ENCODE measurements at regions of chr20 and their contacts with region 1.

Region 1: DNA sequence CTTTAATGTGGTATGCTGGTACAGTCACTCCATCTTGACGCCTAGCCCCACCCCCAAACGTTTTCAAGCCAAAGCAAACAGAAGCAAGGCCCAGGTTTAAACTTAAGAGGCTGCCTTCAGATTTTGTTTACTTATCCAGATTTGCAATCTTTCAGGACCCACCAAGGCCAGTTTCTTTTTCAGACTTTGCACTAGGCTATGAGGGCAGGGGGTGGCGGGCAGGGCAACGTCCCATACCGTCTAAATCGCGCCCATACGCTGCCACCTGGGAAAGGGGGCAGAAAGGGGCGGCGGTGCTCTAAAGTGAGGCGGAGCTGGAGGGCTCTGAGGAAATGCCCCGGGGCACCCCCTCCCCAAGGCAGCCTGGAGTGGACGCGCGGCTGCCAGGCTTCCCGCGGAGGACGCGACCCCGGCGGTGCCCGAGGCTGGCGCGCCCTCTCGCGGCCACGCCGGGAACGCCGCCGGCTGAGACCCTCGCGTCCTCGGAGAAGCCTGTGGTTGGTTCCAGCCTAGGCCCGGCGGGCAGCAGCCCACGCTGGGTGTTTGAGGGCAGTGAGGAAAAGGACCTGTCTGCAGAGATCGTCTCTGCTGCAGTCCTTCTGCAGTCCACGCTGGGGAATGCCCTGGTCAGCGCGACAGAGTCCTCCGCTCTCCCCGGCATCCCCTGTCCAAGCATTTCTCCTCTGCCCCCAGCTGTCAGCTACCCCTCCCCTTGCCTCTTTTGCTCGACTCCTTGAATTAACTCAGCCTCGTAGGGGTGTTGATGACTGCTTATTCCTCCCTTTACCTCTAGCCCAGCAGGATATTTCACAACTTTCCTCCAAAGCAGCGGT is 129.2 kb upstream of the PRND start:
- DNase-seq: peak; percentile 22 to 75
- H3K4me3 ChIP-seq: peak overlapping the region; percentile 22
- H3K4me1 ChIP-seq: no peaks in the 10 kb centered on the region
- H3K27me3 ChIP-seq: peaks cover 21% of the 10 kb centered on the region

Region 2: GRCh38 chr20:4112481-4113421 is 479.8 kb before region 1 on chr20:
- in situ Hi-C with region 1: loop called (anchors 10 kb)
- DNase-seq: no peak
- H3K4me3 ChIP-seq: no peak overlapping the region
- H3K4me1 ChIP-seq: 0 out of 2 replicates have a peak, but pooled peaks cover 3% of the 10 kb centered on the region
- H3K27me3 ChIP-seq: peaks cover 9% of the 10 kb centered on the region; the same call in 1 of the 2 replicates

Region 3: DNA sequence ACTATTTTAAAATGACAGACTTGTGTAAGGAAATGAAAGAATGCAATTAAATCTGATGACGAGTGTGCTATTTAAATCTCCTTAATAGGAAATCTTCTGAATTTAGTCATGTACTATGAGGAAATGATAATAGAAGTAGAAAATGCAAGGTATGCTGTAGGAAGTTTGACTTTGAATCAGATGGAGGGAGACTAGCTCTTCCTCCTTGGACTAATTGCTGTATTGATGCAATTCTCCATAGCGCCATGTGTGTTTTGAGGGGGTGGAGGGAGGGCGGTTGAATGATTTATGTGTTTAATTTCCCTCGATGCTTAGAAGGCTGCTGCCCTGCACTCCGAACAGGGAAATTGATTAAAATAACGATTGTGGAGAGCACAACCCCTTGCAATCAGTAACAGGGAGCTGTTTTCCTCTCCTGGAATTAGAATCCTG is 85.2 kb before region 1 on chr20:
- in situ Hi-C with region 1: no loop called
- DNase-seq: no peak
- H3K4me3 ChIP-seq: no peak overlapping the region
- H3K4me1 ChIP-seq: no peaks in the 10 kb centered on the region
- H3K27me3 ChIP-seq: no peaks in the 10 kb centered on the region

Measured in HAP-1 (cell line).